HCT116 (cell line): ENCODE measurements at regions of chr17 and their contacts with region 1.

Region 1: DNA sequence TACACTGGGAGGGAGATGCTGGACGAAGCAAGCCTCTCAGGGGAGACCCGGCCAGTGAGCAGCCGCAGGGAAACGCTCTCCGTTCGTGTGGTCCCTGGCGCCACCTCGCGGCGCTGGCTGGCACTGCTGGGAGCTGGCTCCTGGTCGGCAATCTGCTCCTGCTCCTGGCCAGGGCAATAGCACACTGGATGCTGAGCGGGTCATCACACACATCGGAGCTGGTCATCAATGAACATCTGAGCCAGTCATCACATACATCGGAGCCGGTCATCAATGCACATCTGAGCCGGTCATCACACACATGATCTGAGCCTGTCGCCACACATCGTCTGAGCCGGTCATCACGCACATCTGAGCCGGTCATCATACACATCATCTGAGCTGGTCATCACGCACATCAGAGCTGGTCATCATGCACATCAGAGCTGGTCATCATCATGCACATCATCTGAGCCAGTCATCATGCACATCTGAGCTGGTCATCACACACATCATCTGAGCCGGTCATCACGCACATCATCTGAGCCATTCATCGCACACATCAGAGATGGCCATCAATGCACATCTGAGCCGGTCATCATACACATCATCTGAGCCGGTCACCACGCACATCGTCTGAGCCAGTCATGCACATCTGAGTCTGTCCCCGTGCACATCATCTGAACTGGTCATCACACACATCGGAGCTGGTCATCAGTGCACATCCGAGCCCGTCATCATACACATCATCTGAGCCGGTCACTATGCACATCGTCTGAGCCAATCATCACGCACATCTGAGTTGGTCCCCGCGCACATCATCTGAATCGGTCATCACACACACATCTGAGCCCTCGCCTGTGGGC is 217.3 kb downstream of the RBFOX3 start:
- DNase-seq: peak; percentile 37
- ATAC-seq: peak; percentile 84
- H3K4me3 ChIP-seq: no peak overlapping the region
- H3K27ac ChIP-seq: no peak overlapping the region
- H3K4me1 ChIP-seq: peaks cover 0 to 8% of the 10 kb centered on the region in 2 experiments; a peak in 1 of 4 replicates
- H3K27me3 ChIP-seq: peaks cover 53% of the 10 kb centered on the region
- CTCF ChIP-seq: peak; percentile 92 to 100 (median 99)
- POLR2A ChIP-seq: no peak
- RAD21 ChIP-seq: peak; percentile 94

Region 2: GRCh38 chr17:79019632-79020584 is 373.7 kb before region 1 on chr17:
- CTCF ChIA-PET with region 1: interaction called, 4 read pairs
- POLR2A ChIA-PET with region 1: no interaction called
- RAD21 ChIA-PET with region 1: no interaction called
- intact Hi-C with region 1: loop called (anchors 1 kb)
- DNase-seq: peak; percentile 76
- ATAC-seq: peak; percentile 72
- H3K4me3 ChIP-seq: no peak overlapping the region
- H3K27ac ChIP-seq: no peak overlapping the region
- H3K4me1 ChIP-seq: peaks cover 4 to 24% of the 10 kb centered on the region in 2 experiments
- H3K27me3 ChIP-seq: no peaks in the 10 kb centered on the region
- CTCF ChIP-seq: peak; percentile 89 to 99 (median 96)
- POLR2A ChIP-seq: no peak
- RAD21 ChIP-seq: peak; percentile 95

Region 3: GRCh38 chr17:79065105-79065670 is 328.4 kb before region 1 on chr17:
- CTCF ChIA-PET with region 1: interaction called, 24 read pairs
- POLR2A ChIA-PET with region 1: no interaction called
- RAD21 ChIA-PET with region 1: interaction called in 1 of 2 experiments, 3 read pairs
- intact Hi-C with region 1: loop called (anchors 2 kb)
- DNase-seq: peak; percentile 52
- ATAC-seq: peak; percentile 78
- H3K4me3 ChIP-seq: no peak overlapping the region
- H3K27ac ChIP-seq: no peak overlapping the region
- H3K4me1 ChIP-seq: no peaks in the 10 kb centered on the region
- H3K27me3 ChIP-seq: no peaks in the 10 kb centered on the region
- CTCF ChIP-seq: peak; percentile 64 to 84 (median 76); a peak in 5 of 6 replicates
- POLR2A ChIP-seq: no peak
- RAD21 ChIP-seq: peak; percentile 70

Region 4: DNA sequence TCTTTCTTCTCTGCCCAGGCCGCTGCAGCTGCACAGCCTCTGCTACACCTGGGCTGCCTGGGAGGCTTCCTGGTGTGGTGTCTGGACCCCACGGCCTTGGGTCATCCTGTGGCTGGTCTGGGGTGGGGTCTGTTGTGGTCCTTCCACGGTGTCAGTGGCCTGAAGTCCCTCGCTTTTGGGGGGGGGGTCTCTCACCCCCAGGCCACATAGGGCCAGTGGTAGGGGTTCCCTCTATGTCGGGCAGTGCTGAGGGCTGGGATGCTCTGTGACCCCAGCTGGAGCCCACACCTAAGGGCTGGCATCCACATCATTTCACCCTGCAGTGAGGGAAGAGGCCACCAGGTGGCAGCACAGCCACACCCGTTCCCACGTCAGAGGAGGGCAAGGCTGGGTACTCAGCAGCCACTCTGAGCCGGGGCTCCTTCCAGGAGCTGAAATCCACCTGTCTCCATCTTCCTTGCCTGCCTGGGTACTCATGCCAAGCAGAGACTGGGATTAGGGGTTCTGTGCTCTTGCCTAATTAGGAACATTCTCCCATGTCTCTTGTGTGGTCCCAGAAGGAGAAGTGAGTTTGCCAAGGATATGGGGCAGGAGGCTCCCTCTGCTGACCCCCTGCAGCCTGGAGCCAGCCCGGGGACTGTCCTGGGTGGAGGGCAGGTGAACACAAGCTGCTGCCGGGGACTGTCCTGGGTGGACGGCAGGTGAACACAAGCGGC is 306.0 kb before region 1 on chr17:
- CTCF ChIA-PET with region 1: interaction called, 126 read pairs
- POLR2A ChIA-PET with region 1: no interaction called
- RAD21 ChIA-PET with region 1: interaction called, 9 to 10 read pairs
- intact Hi-C with region 1: loop called (anchors 1 kb)
- DNase-seq: peak; percentile 31
- ATAC-seq: peak; percentile 88
- H3K4me3 ChIP-seq: no peak overlapping the region
- H3K27ac ChIP-seq: no peak overlapping the region
- H3K4me1 ChIP-seq: no peaks in the 10 kb centered on the region
- H3K27me3 ChIP-seq: no peaks in the 10 kb centered on the region
- CTCF ChIP-seq: peak; percentile 88 to 98 (median 96)
- POLR2A ChIP-seq: no peak
- RAD21 ChIP-seq: peak; percentile 92

Region 5: DNA sequence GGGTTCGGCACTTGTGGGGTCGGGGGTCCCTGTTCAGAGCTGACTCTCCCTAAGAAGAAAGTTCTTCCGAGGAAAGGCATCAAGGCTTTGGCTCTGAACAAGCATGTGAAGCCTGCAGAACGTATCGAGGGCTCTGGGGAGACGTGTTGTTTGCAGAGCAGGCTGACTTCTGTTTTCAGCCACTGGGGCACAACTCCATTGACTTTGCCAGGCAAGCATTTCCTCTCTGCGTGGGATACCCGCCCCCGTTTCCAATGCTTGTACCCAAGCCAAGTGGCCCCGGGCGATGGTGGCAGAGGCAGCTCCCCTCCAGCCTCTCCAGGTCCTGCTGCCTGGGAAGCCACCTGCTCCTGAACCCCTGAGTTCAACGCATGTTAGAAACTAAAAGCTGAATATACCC is 38.4 kb before region 1 on chr17:
- CTCF ChIA-PET with region 1: interaction called, 20 read pairs
- POLR2A ChIA-PET with region 1: no interaction called
- RAD21 ChIA-PET with region 1: no interaction called
- intact Hi-C with region 1: no loop called
- DNase-seq: no peak
- ATAC-seq: no peak
- H3K4me3 ChIP-seq: no peak overlapping the region
- H3K27ac ChIP-seq: no peak overlapping the region
- H3K4me1 ChIP-seq: no peaks in the 10 kb centered on the region
- H3K27me3 ChIP-seq: peaks cover 89% of the 10 kb centered on the region
- CTCF ChIP-seq: no peak
- POLR2A ChIP-seq: no peak
- RAD21 ChIP-seq: no peak

Region 6: DNA sequence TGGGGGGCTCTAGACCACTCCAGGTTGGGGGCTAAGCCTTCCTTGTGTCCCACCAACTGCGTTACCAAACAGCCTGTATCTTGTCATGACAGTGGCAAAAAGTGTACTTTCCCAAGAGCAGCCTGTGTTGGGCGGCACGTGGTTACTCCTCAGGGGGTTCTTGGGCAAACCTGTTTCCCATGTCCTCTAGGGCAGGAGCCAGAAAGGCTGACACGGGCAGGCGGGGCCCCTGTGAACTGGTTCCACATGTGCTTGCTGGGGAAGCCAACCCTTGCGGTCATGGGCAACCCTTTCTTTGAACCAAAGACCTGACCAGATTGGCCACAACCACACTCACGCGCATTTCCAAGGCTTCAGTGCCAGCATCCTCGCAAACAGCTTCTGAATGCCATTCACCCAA is 11.3 kb before region 1 on chr17:
- CTCF ChIA-PET with region 1: interaction called, 13 read pairs
- POLR2A ChIA-PET with region 1: no interaction called
- RAD21 ChIA-PET with region 1: no interaction called
- intact Hi-C with region 1: no loop called
- DNase-seq: no peak
- ATAC-seq: no peak
- H3K4me3 ChIP-seq: no peak overlapping the region
- H3K27ac ChIP-seq: no peak overlapping the region
- H3K4me1 ChIP-seq: no peaks in the 10 kb centered on the region
- H3K27me3 ChIP-seq: peaks cover 65% of the 10 kb centered on the region
- CTCF ChIP-seq: no peak
- POLR2A ChIP-seq: no peak
- RAD21 ChIP-seq: no peak